ENCODE measurements at regions of chr10 and their contacts with region 1.

Region 1: DNA sequence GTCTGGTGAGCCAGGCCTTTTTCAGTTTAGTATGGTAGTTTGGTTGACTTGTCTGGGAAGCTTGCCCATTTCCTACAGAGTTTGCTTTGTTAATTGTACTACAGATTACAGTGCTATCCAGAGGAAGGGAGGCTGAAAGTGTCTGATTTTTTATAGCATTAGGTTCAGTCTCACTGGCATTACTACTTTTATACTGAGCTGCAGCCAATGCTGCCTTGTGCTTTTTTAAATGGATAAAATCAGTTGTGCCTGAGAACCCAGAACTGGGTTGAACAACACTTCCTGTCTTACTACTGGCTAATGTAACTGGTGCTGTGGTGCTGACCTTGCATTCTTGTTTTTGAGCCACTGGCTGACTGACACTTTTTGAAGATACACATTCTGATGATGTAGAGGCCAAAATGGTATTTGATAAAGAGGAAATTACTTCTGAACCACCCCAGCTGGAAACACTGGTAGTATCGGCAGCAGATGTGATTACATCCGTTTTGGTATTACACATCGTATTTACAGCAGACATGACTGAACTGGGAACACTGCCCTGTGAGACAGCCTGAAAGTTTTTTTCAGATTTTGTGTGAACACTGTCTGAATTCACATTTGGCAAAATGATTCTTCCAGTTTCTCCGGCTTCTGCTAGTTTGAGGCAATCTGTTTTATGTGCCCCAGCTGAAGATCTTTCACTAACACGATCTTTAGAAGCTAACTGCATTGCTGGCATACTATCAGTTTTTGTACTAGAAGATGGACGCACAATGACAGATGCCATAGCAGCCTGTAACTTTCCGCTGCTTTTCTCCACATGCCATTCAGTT is 74.1 kb downstream of the NRBF2 start:
- DNase-seq: peak in 2 of 10 donors; percentile 22 to 47
- H3K4me3 ChIP-seq: peak overlapping the region in 51 of 59 donors; percentile 5 to 61 (median 30)
- H3K27ac ChIP-seq: peak overlapping the region; percentile 14 to 85 (median 71)
- H3K27me3 ChIP-seq: no peaks in the 10 kb centered on the region
- CTCF ChIP-seq: peak in 7 of 56 donors; percentile 7 to 19 (median 8)

Region 2: DNA sequence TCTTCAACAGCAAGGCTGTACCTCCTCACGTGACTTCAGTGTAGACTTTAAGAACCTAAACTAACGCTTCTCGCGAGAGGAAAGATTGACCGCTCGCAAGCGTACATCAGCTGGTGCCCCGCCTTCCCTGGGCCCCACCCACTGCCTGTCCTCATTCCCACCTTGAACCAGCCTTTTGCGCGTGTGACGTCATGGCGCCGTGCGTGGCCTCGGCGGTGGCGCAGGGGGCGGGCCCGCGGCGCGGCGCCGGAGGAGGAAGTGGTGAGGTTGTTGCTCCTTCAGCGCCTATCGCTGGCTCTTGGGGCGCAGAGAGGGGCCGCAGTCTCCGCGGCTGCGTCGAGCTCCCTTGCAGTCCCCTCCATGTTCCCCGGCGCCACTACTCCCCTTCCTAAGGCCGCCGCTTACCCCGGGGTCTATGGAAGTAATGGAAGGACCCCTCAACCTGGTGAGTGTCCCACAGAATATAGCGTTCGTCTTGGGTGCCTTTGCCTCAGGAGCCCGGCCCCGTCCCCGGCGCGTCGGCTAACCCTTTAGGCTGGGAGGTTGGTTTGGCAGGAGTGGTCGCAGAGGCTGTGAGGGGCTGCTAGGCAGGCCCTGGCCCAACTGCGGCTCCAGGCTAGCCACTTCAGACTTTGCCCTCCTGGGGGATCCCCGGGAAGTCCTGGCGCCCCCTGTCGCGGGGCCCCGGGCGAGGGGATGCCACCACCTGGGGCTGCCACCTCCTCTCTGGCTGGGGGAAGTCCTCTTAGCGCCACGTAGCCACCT is 74.0 kb before region 1 on chr10 and contains the start of gene NRBF2:
- intact Hi-C with region 1: no loop called
- DNase-seq: peak; percentile 87 to 97 (median 96)
- H3K4me3 ChIP-seq: peak within 1 kb of the TSS; percentile 68 to 99 (median 92)
- H3K27ac ChIP-seq: peak within 1 kb of the TSS; percentile 50 to 95 (median 86)
- H3K27me3 ChIP-seq: no peaks in the 10 kb centered on the region
- CTCF ChIP-seq: peak in 25 of 56 donors; percentile 1 to 42 (median 19)
- total RNA-seq, gene NRBF2: 8.6 to 26.3 (median 19.6) TPM

Region 3: DNA sequence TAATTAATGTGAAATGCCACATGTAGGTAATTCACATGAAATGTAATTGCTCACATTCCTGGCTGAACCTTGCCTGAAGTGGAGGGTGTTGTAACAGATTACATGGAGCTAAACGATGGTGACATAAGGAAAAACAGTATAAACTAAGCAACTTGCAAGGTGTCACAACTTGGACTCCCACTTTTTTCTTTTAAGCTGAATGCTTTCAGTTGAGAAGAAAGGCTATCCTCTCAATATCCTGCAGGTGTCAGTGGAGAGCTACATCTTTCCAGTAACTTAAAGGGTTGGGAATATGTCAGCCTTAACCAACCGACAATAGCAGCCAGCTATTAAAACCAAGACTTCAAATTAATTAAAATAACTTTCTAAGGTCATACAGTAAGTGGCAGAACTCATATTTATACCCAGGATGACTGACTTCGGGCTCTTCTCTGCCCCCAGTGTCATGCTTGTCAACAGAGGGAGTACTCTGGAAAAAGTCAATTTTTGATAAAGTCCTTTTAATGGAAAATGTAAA is 40.4 kb before region 1 on chr10:
- intact Hi-C with region 1: loop called in 1 of 2 experiments (anchors 5 kb)
- DNase-seq: peak in 1 of 10 donors; percentile 16
- H3K4me3 ChIP-seq: no peak overlapping the region
- H3K27ac ChIP-seq: peak overlapping the region in 1 of 59 donors; percentile 15
- H3K27me3 ChIP-seq: no peaks in the 10 kb centered on the region
- CTCF ChIP-seq: peak; percentile 66 to 98 (median 86)

Region 4: DNA sequence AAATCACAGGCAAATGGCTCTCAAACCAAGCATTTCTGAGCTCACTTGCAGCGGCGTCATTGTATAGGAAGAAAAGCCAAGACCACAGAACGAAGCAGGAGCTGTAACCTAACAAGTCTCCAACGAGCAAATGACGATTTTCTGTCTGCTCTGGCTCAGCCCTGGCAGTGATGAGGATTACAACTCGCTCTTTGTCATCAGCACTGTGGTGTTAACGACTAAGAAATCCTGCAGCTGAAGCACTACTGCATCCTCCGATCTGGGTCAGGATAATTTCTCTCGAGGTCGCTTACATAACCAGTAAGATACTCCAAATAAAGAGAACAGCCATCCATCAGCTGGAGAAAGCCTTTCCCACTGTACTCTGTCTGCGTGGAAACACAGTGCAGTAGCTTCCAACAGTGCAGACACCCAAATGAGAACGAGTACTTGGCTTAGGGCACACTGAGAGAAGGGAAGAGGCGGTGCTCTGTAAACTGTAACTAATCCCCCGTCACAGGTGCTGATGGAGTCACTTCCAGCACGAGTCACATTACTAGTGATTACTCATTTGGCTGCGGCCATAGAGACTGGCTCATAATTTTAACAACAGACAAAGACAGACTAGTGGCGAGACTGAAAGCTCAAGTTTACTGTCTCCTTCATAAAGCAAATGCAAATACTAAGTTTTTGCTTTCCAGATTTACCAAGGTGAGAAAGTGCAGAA is 61.7 kb after region 1 on chr10:
- intact Hi-C with region 1: loop called in 1 of 2 experiments (anchors 10 kb)
- DNase-seq: peak in 9 of 10 donors; percentile 53 to 88 (median 67)
- H3K4me3 ChIP-seq: peak overlapping the region; percentile 36 to 76 (median 60)
- H3K27ac ChIP-seq: peak overlapping the region; percentile 45 to 97 (median 92)
- H3K27me3 ChIP-seq: no peaks in the 10 kb centered on the region
- CTCF ChIP-seq: peak in 45 of 56 donors; percentile 10 to 61 (median 35)

Region 5: GRCh38 chr10:63465293-63466143 is 258.3 kb after region 1 on chr10 and contains the start of gene JMJD1C:
- intact Hi-C with region 1: loop called in 1 of 2 experiments (anchors 5 kb)
- DNase-seq: peak; percentile 44 to 81 (median 58)
- H3K4me3 ChIP-seq: peak within 1 kb of the TSS; percentile 67 to 98 (median 84)
- H3K27ac ChIP-seq: peak within 1 kb of the TSS; percentile 53 to 97 (median 90)
- H3K27me3 ChIP-seq: no peaks in the 10 kb centered on the region
- CTCF ChIP-seq: peak in 26 of 56 donors; percentile 3 to 41 (median 10)
- total RNA-seq, gene JMJD1C: 80.5 to 152 (median 104) TPM